Ovary (tissue), 10 donors: ENCODE measurements at regions of chr5 and their contacts with region 1.

Region 1: DNA sequence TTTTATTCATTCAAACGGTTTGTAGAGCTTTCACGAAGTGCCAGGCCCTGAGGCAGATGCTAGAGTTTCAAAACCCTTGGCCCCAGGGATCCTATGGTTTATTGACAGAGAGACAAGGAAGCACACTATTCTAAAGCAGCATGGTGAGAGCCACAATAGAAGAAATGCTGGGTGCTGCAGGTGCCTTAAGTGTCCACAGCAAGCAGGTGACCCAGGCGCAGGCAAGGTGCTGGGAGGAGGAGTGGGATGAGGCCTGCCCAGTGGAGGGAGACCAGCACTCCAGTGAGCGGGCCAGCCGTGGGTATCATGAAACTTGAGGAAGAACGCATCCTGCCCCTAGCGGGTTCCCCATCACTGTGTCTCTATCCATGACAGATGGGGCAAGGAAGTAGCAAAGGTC is 71.0 kb downstream of the OSMR start:
- DNase-seq: no peak
- H3K4me3 ChIP-seq: no peak overlapping the region
- H3K27ac ChIP-seq: no peak overlapping the region
- H3K4me1 ChIP-seq: no peaks in the 10 kb centered on the region
- H3K27me3 ChIP-seq: no peaks in the 10 kb centered on the region
- CTCF ChIP-seq: no peak
- EP300 ChIP-seq: no peak
- POLR2A ChIP-seq: no peak

Region 2: GRCh38 chr5:38845526-38846378 is 71.0 kb before region 1 on chr5 and contains the start of gene OSMR:
- intact Hi-C with region 1: loop called in 1 of 4 experiments (anchors 10 kb)
- DNase-seq: peak; percentile 95 to 98 (median 96)
- H3K4me3 ChIP-seq: peak within 1 kb of the TSS; percentile 71
- H3K27ac ChIP-seq: peak within 1 kb of the TSS; percentile 59 to 81
- H3K4me1 ChIP-seq: peaks cover 4% of the 10 kb centered on the region
- H3K27me3 ChIP-seq: no peaks in the 10 kb centered on the region
- CTCF ChIP-seq: peak in 1 of 3 donors; percentile 22
- EP300 ChIP-seq: peak; percentile 99
- POLR2A ChIP-seq: peak; percentile 86
- total RNA-seq, gene OSMR: 21.9 to 87.1 (median 49.4) TPM